GM12878 (cell line): ENCODE measurements at regions of chr12 and their contacts with region 1.

Region 1: DNA sequence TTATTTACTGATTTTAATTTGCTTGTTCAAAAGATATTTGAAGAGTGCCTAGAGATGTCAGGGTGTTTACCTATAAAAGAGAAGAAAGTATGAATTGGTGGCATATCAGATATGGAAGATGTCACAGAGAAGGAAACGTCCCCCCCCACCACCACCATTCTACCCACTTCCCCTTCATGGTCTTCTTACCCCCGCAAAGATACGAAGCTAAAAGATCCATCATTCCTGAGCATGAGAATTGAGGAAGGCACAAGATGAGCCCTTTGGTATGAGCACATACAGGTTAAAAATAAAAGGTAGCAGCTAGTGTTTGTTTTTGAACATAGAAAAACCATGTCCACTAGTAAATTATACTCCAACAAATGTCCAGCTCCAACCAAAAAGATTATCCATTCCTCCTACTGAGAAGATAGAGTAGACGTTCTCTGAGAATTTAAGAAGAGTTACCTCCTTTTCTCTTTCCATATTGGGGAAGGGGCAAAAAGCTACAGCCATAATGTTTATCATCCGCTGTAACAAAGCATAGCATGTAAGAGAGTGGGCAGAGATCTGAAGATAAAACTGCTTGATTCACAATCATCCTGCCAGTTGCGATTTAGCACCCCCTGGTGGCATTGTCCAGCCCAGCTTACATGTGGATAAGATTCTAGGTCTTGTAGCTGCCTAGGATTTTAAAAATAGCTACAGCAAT is 29.1 kb downstream of the NFYB start:
- DNase-seq: peak; percentile 55
- ATAC-seq: peak; percentile 98
- H3K4me3 ChIP-seq: no peak overlapping the region
- H3K27ac ChIP-seq: no peak overlapping the region
- H3K4me1 ChIP-seq: no peaks in the 10 kb centered on the region
- H3K27me3 ChIP-seq: no peaks in the 10 kb centered on the region
- CTCF ChIP-seq: peak; percentile 85 to 93 (median 86); a peak in 5 of 6 replicates
- EP300 ChIP-seq: no peak
- POLR2A ChIP-seq: no peak
- RAD21 ChIP-seq: peak; percentile 93

Region 2: DNA sequence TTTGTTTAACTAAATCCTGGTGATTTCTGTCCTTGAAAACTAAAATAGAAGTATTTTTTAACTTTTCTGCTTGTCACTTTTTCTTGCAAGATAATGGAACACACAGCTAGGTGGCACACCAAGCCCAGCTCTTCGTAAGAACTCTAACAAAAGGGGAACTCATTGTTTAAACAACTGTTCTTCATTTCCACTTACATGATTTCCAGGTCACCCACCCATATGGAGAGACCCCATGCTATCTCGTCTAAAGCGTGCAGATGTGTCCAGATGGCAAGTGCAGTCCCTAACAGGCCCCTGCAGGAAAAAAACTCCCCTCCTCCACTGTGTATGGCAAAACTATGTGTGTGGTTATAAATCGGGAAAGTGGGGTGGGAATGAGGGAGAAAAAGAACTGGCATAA is 224.6 kb before region 1 on chr12:
- CTCF ChIA-PET with region 1: interaction called, 239 read pairs
- POLR2A ChIA-PET with region 1: interaction called, 4 read pairs
- RAD21 ChIA-PET with region 1: interaction called, 98 read pairs
- SMC1A ChIA-PET with region 1: interaction called, 75 read pairs
- in situ Hi-C with region 1: loop called (anchors 5 kb)
- intact Hi-C with region 1: loop called (anchors 1 kb)
- DNase-seq: no peak
- ATAC-seq: peak; percentile 20
- H3K4me3 ChIP-seq: no peak overlapping the region
- H3K27ac ChIP-seq: no peak overlapping the region
- H3K4me1 ChIP-seq: peaks cover 29% of the 10 kb centered on the region
- H3K27me3 ChIP-seq: no peaks in the 10 kb centered on the region
- CTCF ChIP-seq: peak; percentile 41 to 74 (median 63); a peak in 5 of 6 replicates
- EP300 ChIP-seq: no peak
- POLR2A ChIP-seq: no peak
- RAD21 ChIP-seq: peak; percentile 97

Region 3: DNA sequence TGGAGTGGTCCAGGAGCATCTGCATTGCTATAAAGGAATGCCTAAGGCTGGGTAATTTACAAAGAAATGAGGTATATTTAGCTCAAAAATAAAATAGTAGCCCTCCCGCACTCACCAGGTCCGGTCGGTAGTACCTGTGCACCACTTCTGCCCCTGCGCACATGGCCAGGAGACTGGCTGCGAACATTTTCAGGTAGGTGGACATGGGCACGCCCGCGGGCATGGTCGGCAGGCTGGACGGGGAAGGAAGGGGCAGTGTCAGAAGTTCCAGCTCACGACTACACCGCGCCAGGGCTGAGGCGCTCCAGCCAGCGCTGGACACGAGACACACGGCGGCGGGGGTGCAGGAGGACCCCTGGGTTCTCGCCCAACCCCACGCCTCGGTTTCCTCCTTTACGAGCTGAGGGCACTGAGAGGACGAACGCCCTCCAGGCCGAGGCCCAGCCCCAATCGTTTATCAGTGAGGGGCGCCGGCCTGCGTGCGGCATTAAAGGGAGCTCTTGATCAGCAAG is 152.3 kb before region 1 on chr12:
- CTCF ChIA-PET with region 1: interaction called, 10 read pairs
- POLR2A ChIA-PET with region 1: interaction called, 3 read pairs
- RAD21 ChIA-PET with region 1: interaction called, 8 read pairs
- SMC1A ChIA-PET with region 1: interaction called, 4 read pairs
- in situ Hi-C with region 1: no loop called
- intact Hi-C with region 1: no loop called
- DNase-seq: no peak
- ATAC-seq: peak; percentile 31
- H3K4me3 ChIP-seq: peak overlapping the region; percentile 80
- H3K27ac ChIP-seq: peak overlapping the region; percentile 77
- H3K4me1 ChIP-seq: peaks cover 8% of the 10 kb centered on the region
- H3K27me3 ChIP-seq: no peaks in the 10 kb centered on the region
- CTCF ChIP-seq: no peak
- EP300 ChIP-seq: no peak
- POLR2A ChIP-seq: no peak
- RAD21 ChIP-seq: no peak

Region 4: GRCh38 chr12:104057771-104058197 is 51.1 kb before region 1 on chr12:
- CTCF ChIA-PET with region 1: interaction called, 118 read pairs
- POLR2A ChIA-PET with region 1: interaction called, 4 read pairs
- RAD21 ChIA-PET with region 1: interaction called, 50 read pairs
- SMC1A ChIA-PET with region 1: interaction called, 75 read pairs
- in situ Hi-C with region 1: loop called (anchors 5 kb)
- intact Hi-C with region 1: loop called (anchors 1 kb)
- DNase-seq: no peak
- ATAC-seq: peak; percentile 68
- H3K4me3 ChIP-seq: no peak overlapping the region
- H3K27ac ChIP-seq: no peak overlapping the region
- H3K4me1 ChIP-seq: no peaks in the 10 kb centered on the region
- H3K27me3 ChIP-seq: peaks cover 0 to 2% of the 10 kb centered on the region in 2 experiments; a peak in 2 of 4 replicates
- CTCF ChIP-seq: peak; percentile 71 to 77 (median 75)
- EP300 ChIP-seq: no peak
- POLR2A ChIP-seq: no peak
- RAD21 ChIP-seq: peak; percentile 83

Region 5: DNA sequence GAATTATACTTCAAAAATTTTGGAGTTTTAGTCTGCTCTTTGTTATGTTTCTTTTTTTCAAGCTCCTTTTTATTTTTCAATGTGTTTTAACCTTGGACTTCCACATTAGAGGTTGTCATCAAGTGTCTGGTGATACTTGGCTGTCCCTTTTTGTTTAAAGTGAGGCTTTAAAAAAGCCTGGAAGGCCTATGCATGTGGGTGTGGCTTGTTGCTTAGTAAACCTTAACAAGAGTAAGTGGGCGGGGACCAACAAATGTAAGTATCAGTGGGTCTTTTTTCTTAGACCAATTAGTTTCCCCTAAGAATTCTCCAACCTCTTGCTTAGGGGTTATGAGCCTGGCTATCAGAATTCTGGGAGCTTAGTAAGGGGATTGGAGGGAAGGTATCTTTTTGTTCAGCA is 18.2 kb before region 1 on chr12:
- CTCF ChIA-PET with region 1: interaction called, 20 read pairs
- POLR2A ChIA-PET with region 1: interaction called, 3 read pairs
- RAD21 ChIA-PET with region 1: interaction called, 9 read pairs
- SMC1A ChIA-PET with region 1: interaction called, 5 read pairs
- in situ Hi-C with region 1: no loop called
- intact Hi-C with region 1: no loop called
- DNase-seq: no peak
- ATAC-seq: no peak
- H3K4me3 ChIP-seq: no peak overlapping the region
- H3K27ac ChIP-seq: no peak overlapping the region
- H3K4me1 ChIP-seq: no peaks in the 10 kb centered on the region
- H3K27me3 ChIP-seq: no peaks in the 10 kb centered on the region
- CTCF ChIP-seq: no peak
- EP300 ChIP-seq: no peak
- POLR2A ChIP-seq: no peak
- RAD21 ChIP-seq: no peak

Region 6: DNA sequence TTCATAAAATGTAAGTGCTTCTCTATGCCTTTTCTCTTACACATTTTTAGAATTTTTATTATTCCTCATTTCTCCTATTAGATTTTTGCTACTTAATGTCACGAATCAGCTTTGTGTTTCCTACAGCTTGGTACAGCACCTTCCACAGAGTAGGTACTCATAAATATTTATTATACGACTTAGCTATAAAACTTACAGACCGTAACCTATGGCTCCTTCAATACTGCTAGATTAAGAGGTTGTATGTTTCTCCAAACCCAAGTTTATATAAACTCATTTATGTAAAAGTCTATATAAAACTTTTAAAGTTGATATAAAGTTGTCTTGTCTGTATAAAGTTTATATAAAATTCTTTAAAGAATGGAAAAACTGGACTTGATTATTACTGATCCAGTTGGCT is 17.6 kb after region 1 on chr12:
- CTCF ChIA-PET with region 1: interaction called, 35 read pairs
- POLR2A ChIA-PET with region 1: interaction called, 4 read pairs
- RAD21 ChIA-PET with region 1: interaction called, 6 read pairs
- SMC1A ChIA-PET with region 1: interaction called, 15 read pairs
- in situ Hi-C with region 1: no loop called
- intact Hi-C with region 1: no loop called
- DNase-seq: no peak
- ATAC-seq: no peak
- H3K4me3 ChIP-seq: no peak overlapping the region
- H3K27ac ChIP-seq: no peak overlapping the region
- H3K4me1 ChIP-seq: no peaks in the 10 kb centered on the region
- H3K27me3 ChIP-seq: no peaks in the 10 kb centered on the region
- CTCF ChIP-seq: no peak
- EP300 ChIP-seq: no peak
- POLR2A ChIP-seq: no peak
- RAD21 ChIP-seq: no peak

Region 7: DNA sequence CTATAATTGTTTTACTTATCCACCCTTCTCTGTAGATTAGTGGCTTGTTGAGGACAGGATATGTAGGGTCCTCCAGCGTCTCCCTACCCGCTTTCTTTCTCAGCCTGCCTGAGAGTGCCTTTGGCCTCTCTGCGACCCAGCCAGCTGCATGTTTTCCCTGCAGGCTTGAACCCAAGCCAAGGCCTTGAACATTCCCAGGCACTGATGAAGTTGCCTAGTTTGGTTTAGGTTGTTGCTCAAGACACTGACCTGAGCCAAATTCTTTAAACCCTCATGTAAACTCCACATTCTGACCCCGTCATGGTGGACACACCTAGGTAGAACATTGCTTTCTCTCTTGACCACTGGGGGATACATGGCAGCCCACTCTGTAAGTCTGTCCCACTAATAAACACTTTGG is 73.2 kb after region 1 on chr12:
- CTCF ChIA-PET with region 1: no interaction called
- POLR2A ChIA-PET with region 1: no interaction called
- RAD21 ChIA-PET with region 1: no interaction called
- SMC1A ChIA-PET with region 1: no interaction called
- in situ Hi-C with region 1: no loop called
- intact Hi-C with region 1: no loop called
- DNase-seq: no peak
- ATAC-seq: no peak
- H3K4me3 ChIP-seq: no peak overlapping the region
- H3K27ac ChIP-seq: no peak overlapping the region
- H3K4me1 ChIP-seq: no peaks in the 10 kb centered on the region; the same call in 1 of the 2 replicates
- H3K27me3 ChIP-seq: no peaks in the 10 kb centered on the region; a peak in 1 of 4 replicates
- CTCF ChIP-seq: no peak
- EP300 ChIP-seq: no peak
- POLR2A ChIP-seq: no peak
- RAD21 ChIP-seq: no peak